ENCODE measurements at regions of chr11 and their contacts with region 1.

Region 1: DNA sequence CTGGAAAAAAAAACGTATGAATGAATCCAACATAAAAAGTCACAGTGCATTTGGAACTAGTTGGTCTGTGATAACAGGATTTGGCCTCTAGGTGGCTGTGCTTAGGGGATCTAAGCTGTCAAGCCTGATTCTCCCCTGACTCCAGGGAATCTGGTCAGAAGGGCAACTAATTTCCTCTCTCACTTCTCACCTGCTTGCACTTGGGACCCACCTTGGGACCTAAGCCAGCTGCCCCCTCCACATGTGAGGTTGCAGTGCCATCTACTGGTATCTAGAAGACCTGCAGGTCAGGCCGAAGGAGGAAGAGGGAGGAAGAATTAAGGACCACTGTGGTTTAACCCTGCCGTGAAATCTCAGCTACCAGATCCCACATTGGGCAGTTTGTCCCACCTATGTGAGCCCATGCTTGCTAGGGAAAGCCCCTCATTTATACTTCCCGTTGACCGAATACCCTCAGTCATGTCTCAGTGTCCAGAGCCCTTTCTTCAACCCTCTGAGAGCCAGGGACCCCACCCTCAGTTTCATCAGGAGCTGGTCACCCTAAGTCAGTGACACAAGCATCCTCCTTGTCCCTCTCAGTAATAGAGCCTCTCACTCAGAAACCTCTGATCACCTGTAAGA is 33.2 kb upstream of the CAVIN3 start:
- DNase-seq: peak; percentile 28 to 76 (median 42)
- ATAC-seq: peak; percentile 74
- H3K4me3 ChIP-seq: no peak overlapping the region
- H3K4me3 Mint-ChIP-seq: no peak overlapping the region
- H3K27ac ChIP-seq: no peak overlapping the region
- H3K27ac Mint-ChIP-seq: no peak overlapping the region
- H3K4me1 ChIP-seq: peaks cover 5% of the 10 kb centered on the region
- H3K4me1 Mint-ChIP-seq: no peaks in the 10 kb centered on the region
- H3K27me3 ChIP-seq: no peaks in the 10 kb centered on the region
- H3K27me3 Mint-ChIP-seq: no peaks in the 10 kb centered on the region
- CTCF ChIP-seq: peak; percentile 96

Region 2: DNA sequence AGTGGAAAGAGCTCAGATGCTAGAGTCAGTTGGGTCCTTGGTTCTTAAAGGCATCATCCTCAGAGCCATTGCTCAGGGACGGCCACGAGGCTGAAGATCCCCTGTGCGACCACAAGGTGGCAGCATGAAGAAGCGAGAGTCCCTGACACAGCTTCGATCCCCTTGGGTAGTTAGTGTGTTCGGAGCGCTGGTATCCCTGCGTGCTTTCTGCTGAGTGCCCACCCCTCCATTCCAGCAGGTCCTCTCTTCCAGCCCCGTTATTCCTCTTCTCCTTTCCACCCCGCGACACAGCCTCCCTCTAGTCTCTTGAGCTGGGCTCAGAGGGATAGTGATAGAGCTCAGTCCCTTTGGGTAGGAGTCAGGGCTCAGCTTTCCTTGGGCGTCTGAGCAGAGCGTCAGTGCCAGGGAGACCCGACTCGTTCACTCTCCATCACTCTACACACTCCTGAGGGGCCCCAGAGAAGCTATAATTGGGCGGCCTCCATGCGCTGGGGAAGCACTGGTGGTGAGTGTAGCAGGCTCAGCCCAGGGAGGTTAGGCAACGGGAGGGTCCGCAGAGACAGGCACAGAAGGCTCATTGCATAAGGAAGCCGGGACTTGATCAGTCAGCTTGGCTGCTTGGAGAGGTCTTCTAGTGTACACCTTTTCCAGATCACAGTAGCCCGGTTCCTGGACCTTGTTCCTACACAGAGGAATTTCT is 1716.4 kb before region 1 on chr11 and contains the start of gene OR51D1:
- CTCF ChIA-PET with region 1: interaction called, 5 read pairs
- POLR2A ChIA-PET with region 1: no interaction called
- intact Hi-C with region 1: loop called (anchors 2 to 5 kb)
- DNase-seq: peak; percentile 47 to 80 (median 57)
- ATAC-seq: peak; percentile 86
- H3K4me3 ChIP-seq: no peak within 1 kb of the TSS
- H3K4me3 Mint-ChIP-seq: no peak within 1 kb of the TSS
- H3K27ac ChIP-seq: no peak within 1 kb of the TSS
- H3K27ac Mint-ChIP-seq: no peak within 1 kb of the TSS
- H3K4me1 ChIP-seq: peaks cover 7% of the 10 kb centered on the region
- H3K4me1 Mint-ChIP-seq: no peaks in the 10 kb centered on the region
- H3K27me3 ChIP-seq: peaks cover 4 to 7% of the 10 kb centered on the region in 2 experiments
- H3K27me3 Mint-ChIP-seq: peaks cover 24% of the 10 kb centered on the region
- CTCF ChIP-seq: peak; percentile 87
- total RNA-seq, gene OR51D1: not detected

Region 3: GRCh38 chr11:5129457-5129877 is 1224.0 kb before region 1 on chr11:
- CTCF ChIA-PET with region 1: interaction called, 5 read pairs
- POLR2A ChIA-PET with region 1: no interaction called
- intact Hi-C with region 1: loop called (anchors 5 kb)
- DNase-seq: no peak
- ATAC-seq: no peak
- H3K4me3 ChIP-seq: no peak overlapping the region
- H3K4me3 Mint-ChIP-seq: no peak overlapping the region
- H3K27ac ChIP-seq: no peak overlapping the region
- H3K27ac Mint-ChIP-seq: no peak overlapping the region
- H3K4me1 ChIP-seq: no peaks in the 10 kb centered on the region
- H3K4me1 Mint-ChIP-seq: no peaks in the 10 kb centered on the region
- H3K27me3 ChIP-seq: no peaks in the 10 kb centered on the region
- H3K27me3 Mint-ChIP-seq: peaks cover 10% of the 10 kb centered on the region
- CTCF ChIP-seq: no peak

Region 4: DNA sequence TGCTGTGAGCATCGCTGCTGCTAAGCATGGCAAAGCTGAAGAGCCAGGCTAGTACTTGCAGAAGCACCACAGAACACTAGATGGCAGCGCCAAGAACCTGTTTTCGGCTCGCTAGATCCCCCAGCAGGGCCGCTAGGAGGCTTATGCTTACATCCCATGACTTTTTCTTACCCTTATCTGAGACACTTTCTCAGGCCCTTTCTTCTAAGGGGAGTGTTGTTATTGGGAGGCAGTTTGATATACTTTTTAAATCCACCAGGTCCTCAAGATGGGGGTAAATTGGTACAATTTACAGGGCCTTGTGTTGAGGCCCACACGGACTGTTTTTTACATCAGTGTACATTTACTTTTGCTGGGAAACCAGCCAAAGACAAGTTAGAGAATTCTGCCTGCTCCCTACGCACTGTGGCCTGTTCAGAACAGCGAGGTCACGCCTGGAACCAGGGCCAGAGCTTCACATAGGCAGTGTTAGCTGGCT is 753.1 kb before region 1 on chr11:
- CTCF ChIA-PET with region 1: no interaction called
- POLR2A ChIA-PET with region 1: no interaction called
- intact Hi-C with region 1: loop called in 1 of 2 experiments (anchors 5 kb)
- DNase-seq: peak; percentile 40 to 78 (median 53)
- ATAC-seq: peak; percentile 90
- H3K4me3 ChIP-seq: no peak overlapping the region
- H3K4me3 Mint-ChIP-seq: no peak overlapping the region
- H3K27ac ChIP-seq: no peak overlapping the region
- H3K27ac Mint-ChIP-seq: no peak overlapping the region
- H3K4me1 ChIP-seq: peaks cover 8% of the 10 kb centered on the region
- H3K4me1 Mint-ChIP-seq: peaks cover 12% of the 10 kb centered on the region
- H3K27me3 ChIP-seq: peaks cover 0 to 8% of the 10 kb centered on the region in 2 experiments
- H3K27me3 Mint-ChIP-seq: peaks cover 20% of the 10 kb centered on the region
- CTCF ChIP-seq: peak; percentile 84

Region 5: GRCh38 chr11:6251120-6251733 is 102.2 kb before region 1 on chr11:
- CTCF ChIA-PET with region 1: interaction called, 18 read pairs
- POLR2A ChIA-PET with region 1: no interaction called
- intact Hi-C with region 1: loop called (anchors 1 to 2 kb)
- DNase-seq: peak; percentile 15 to 68 (median 32)
- ATAC-seq: peak; percentile 90
- H3K4me3 ChIP-seq: no peak overlapping the region
- H3K4me3 Mint-ChIP-seq: no peak overlapping the region
- H3K27ac ChIP-seq: no peak overlapping the region
- H3K27ac Mint-ChIP-seq: no peak overlapping the region
- H3K4me1 ChIP-seq: no peaks in the 10 kb centered on the region
- H3K4me1 Mint-ChIP-seq: no peaks in the 10 kb centered on the region
- H3K27me3 ChIP-seq: no peaks in the 10 kb centered on the region
- H3K27me3 Mint-ChIP-seq: peaks cover 4% of the 10 kb centered on the region
- CTCF ChIP-seq: peak; percentile 72

Measured in CD4-positive, alpha-beta T cell (primary cell).